ENCODE measurements at regions of chr5 and their contacts with region 1.

Region 1: DNA sequence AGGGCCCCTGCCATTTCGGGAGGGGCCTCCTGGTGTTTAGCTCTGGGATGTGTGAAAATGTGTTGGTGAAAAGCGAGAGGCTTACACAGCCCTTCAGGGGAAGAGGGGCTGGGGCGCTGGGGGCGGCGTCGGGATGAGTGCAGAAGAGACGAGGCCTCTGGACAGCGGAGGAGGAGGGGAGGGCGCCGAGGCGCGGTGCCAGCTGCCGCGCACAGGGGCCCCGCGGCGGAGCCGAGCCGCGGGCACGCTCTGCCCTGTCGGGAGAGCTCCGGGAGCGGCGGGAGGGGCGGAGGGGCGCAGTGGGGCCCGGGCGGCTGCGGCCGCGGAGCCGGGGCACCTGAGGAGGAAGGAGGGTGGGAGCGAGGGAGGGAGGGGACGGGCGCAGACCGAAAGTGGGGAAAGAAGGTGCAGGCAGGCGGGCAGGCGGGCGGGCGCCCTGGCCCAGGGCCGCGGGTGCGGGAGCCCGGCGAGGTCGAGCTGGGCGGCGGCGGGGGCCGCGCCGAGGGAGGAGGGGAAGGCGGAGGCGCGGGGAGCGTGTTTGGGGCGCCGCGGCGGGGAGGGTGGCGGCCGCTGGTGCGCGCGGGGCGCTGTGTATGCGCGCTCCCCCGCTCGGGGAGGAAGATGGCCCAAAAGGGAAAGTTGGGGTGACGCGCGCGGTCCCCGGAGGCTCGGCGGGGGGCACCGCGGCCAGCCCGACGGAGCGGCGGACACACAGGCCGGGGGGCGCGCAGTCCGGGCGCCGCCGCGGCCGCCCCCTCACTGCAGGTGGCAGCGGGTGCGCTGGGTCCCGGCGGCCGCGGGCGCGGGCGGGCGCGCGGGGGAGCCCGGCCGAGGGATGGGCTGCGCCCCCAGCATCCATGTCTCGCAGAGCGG is at the start of gene PDE8B:
- DNase-seq: no peak
- H3K4me3 ChIP-seq: peak within 1 kb of the TSS; percentile 70 to 90
- H3K27ac ChIP-seq: peak within 1 kb of the TSS; percentile 33 to 40
- H3K4me1 ChIP-seq: peaks cover 0 to 2% of the 10 kb centered on the region in 2 donors
- H3K27me3 ChIP-seq: no peaks in the 10 kb centered on the region
- CTCF ChIP-seq: no peak
- total RNA-seq, gene PDE8B: 28.1 TPM

Region 2: DNA sequence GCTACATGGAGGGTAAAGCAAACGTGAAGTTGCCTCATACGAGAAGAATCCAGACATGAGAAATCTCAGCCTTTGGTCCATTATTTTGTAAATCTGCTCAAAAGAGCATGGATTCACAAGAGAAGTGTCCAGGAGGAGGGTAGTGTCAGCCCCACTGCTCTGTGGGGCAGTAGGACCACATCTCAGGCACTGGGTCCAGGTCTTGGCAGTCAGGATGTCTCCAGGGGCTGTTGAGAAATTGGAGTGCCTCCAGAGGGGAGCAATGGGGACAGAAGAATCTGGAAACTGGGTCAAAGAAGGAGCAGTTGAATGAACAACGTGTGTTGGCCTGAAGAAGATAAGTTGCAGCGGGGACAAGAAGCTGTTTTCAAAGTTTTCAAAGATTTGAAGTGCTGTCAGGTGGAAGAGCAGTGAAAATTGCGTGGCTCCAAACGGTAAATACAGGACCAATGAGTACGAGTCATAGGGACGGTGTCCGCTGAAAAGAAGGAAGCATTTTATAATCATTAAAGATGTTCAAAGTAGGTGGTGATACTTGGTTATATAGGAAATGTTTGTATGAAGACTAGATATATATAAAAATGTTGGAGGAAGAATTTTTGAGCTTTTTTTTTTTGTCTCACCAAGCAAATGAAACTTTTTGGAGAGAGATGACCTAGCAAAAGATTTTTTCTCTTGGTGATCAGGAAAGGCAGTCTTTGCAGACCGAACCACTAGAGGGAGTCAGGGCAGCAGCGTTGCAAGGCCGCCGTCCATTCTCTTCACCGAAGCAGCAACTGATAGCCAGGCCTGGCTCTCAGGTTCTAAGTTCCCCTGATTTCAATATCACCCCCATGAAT is 66.1 kb before region 1 on chr5:
- intact Hi-C with region 1: loop called (anchors 2 kb)
- DNase-seq: peak in 1 of 2 donors; percentile 86
- H3K4me3 ChIP-seq: no peak overlapping the region
- H3K27ac ChIP-seq: peak overlapping the region; percentile 54 to 58
- H3K4me1 ChIP-seq: peaks cover 0 to 6% of the 10 kb centered on the region in 2 donors
- H3K27me3 ChIP-seq: no peaks in the 10 kb centered on the region
- CTCF ChIP-seq: peak; percentile 60 to 83 (median 82)

Region 3: DNA sequence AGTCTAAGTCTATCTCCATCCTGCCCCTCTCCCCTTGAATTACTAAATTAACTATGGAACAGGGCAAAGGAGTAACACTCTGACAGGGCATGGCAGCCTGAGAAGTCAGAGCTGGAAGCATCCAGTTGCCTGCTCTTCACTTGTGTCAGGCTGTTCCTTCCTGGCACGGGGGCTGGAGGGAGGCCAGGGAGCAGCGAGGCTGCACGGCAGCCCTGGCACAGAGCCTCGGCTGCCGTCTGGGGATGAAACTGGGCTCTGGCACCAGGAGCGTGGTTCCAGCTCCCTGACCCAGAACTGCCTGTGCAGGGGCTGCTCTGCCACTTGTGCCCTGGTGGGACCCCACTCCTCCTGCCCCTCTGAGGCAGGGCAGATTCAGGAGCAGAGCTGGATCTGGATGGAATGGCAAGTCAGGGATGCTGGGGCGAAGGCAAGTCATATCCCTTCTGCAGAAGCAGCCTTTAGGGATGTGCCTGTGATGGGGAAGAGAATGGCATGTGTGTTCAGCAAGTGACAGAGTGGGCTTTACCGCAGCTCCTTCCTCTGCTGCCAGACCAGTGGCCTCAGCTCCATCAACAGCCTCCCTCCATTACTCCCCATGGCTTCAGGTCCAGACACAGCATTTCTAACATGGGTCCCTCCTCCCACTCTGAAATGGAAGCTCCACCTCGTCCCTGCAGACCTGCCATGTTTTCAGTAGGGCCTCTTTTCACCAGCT is 42.0 kb before region 1 on chr5:
- intact Hi-C with region 1: loop called (anchors 5 kb)
- DNase-seq: peak; percentile 16 to 85
- H3K4me3 ChIP-seq: peak overlapping the region in 1 of 2 donors; percentile 12
- H3K27ac ChIP-seq: peak overlapping the region; percentile 15 to 21
- H3K4me1 ChIP-seq: peaks cover 0 to 25% of the 10 kb centered on the region in 2 donors
- H3K27me3 ChIP-seq: no peaks in the 10 kb centered on the region
- CTCF ChIP-seq: no peak

Region 4: GRCh38 chr5:77180167-77181081 is 29.9 kb before region 1 on chr5:
- intact Hi-C with region 1: loop called (anchors 2 kb)
- DNase-seq: peak in 1 of 2 donors; percentile 76
- H3K4me3 ChIP-seq: peak overlapping the region; percentile 54 to 79
- H3K27ac ChIP-seq: peak overlapping the region; percentile 25 to 64
- H3K4me1 ChIP-seq: no peaks in the 10 kb centered on the region
- H3K27me3 ChIP-seq: no peaks in the 10 kb centered on the region
- CTCF ChIP-seq: no peak

Region 5: DNA sequence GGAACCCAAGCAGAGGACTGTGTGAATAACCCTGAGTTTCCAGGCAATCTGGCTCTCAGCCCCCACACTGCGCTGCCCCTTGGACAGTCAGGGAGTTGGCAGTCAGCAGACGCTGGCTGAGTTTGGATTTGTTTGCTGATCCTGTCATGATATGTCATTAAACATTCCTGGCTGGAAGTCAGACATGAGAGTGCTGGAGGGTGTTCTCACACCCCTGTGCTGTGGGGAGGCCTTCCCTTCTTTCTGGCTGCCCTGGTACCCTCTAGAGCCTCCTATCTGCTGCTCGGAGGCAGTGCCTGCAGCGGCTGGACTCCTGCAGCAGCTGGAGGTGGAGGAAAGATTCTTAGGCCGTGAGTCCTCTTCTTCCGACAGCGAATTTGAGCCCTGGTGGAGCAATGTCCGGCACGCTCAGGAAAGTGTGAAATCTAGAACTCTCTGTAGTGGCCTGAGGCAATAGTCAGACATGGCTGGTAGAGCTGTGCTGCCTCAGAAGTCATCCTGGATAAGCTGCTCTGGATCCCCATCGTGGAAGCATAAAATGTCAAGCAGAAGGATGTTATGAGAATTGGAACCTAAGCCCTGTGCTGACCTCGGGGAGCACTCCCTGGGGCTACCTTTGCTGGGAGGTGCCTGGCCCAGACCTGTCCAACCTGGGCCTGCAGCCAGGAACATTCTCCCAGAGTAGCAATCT is 72.2 kb after region 1 on chr5:
- intact Hi-C with region 1: no loop called
- DNase-seq: peak in 1 of 2 donors; percentile 74
- H3K4me3 ChIP-seq: no peak overlapping the region
- H3K27ac ChIP-seq: peak overlapping the region; percentile 40 to 48
- H3K4me1 ChIP-seq: peaks cover 5 to 7% of the 10 kb centered on the region in 2 donors
- H3K27me3 ChIP-seq: no peaks in the 10 kb centered on the region
- CTCF ChIP-seq: peak in 2 of 3 experiments; percentile 24 to 35

Region 6: DNA sequence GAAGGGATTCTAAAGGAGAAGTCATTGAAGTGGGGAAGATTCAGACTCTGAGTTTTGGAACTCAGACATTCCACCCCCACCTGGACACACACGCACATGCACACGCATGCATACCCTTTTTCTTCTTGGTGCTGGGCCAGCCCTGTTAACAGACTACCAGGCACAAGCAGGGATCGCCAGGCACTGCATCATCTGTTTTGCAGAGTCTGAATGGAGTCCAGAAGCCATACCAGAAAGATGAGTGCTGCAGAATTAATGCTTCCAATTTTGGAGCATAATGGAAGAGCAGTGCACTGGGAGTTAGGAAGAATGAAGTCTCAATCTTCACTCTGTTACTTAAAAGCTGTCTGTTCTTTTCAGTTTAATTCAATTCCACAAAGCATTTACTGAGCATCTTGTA is 95.6 kb after region 1 on chr5:
- intact Hi-C with region 1: loop called (anchors 2 kb)
- DNase-seq: peak; percentile 18 to 82
- H3K4me3 ChIP-seq: no peak overlapping the region
- H3K27ac ChIP-seq: peak overlapping the region; percentile 82 to 85
- H3K4me1 ChIP-seq: peaks cover 23 to 31% of the 10 kb centered on the region in 2 donors
- H3K27me3 ChIP-seq: no peaks in the 10 kb centered on the region
- CTCF ChIP-seq: no peak

Region 7: GRCh38 chr5:77356740-77357139 is 146.4 kb after region 1 on chr5:
- intact Hi-C with region 1: loop called (anchors 5 kb)
- DNase-seq: peak in 1 of 2 donors; percentile 68
- H3K4me3 ChIP-seq: no peak overlapping the region
- H3K27ac ChIP-seq: peak overlapping the region; percentile 63 to 70
- H3K4me1 ChIP-seq: peaks cover 2 to 29% of the 10 kb centered on the region in 2 donors
- H3K27me3 ChIP-seq: no peaks in the 10 kb centered on the region
- CTCF ChIP-seq: no peak

Region 8: DNA sequence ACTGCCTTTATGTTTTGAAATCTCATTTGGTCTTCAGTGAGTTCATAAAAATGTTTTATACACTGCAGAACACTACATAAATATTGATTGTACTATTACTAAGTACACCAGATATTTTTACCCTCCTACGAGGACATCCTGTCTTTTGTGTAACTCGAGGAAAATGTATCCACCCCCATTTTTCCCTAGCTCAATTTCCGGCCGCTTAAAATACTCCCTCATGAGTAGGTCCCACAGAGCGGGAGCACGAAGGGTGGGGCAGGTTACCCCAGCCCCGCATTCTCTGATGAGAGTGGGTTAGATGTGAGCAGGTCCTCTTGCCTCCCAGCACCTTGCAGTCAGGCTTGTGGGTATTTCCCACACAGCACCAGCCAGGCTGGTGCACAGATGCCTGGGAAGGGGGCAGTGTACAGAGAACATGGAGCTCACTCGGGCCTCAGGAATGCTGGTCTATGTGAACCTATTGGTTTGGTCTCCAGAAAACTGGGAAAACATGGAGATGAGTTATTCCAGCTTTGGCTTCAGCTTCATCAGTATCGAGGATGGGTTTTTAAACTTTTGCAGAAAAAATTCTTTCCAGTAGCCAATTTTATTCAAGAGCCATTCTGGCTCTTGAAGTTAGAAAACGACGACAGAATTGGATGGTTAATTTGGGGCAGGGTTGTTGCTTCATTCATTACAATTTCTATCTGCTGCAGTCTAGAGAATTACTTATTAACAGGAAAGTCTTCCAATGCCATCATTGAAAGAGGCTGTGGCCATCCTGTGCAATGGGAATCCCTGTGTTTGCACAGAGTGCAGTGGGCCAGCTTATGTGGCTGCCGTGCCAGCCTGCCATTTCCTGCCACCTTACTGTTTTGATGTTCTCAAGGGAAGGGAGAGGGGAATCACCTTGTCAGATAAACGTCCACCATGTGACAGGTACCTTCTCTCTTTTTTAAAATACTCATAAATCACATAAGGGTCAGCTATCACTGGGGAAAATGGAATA is 208.6 kb after region 1 on chr5:
- intact Hi-C with region 1: loop called (anchors 5 kb)
- DNase-seq: peak; percentile 53 to 93
- H3K4me3 ChIP-seq: no peak overlapping the region
- H3K27ac ChIP-seq: peak overlapping the region; percentile 97
- H3K4me1 ChIP-seq: peaks cover 18 to 34% of the 10 kb centered on the region in 2 donors
- H3K27me3 ChIP-seq: no peaks in the 10 kb centered on the region
- CTCF ChIP-seq: no peak

Measured in ascending aorta (tissue), 2 donors.